BJ (cell line): ENCODE measurements at regions of chr3 and their contacts with region 1.

Region 1: GRCh38 chr3:141303481-141304223 is 64.7 kb upstream of the ZBTB38 start:
- DNase-seq: peak; percentile 44
- H3K4me3 ChIP-seq: no peak overlapping the region
- H3K27me3 ChIP-seq: no peaks in the 10 kb centered on the region
- CTCF ChIP-seq: peak; percentile 68

Region 2: DNA sequence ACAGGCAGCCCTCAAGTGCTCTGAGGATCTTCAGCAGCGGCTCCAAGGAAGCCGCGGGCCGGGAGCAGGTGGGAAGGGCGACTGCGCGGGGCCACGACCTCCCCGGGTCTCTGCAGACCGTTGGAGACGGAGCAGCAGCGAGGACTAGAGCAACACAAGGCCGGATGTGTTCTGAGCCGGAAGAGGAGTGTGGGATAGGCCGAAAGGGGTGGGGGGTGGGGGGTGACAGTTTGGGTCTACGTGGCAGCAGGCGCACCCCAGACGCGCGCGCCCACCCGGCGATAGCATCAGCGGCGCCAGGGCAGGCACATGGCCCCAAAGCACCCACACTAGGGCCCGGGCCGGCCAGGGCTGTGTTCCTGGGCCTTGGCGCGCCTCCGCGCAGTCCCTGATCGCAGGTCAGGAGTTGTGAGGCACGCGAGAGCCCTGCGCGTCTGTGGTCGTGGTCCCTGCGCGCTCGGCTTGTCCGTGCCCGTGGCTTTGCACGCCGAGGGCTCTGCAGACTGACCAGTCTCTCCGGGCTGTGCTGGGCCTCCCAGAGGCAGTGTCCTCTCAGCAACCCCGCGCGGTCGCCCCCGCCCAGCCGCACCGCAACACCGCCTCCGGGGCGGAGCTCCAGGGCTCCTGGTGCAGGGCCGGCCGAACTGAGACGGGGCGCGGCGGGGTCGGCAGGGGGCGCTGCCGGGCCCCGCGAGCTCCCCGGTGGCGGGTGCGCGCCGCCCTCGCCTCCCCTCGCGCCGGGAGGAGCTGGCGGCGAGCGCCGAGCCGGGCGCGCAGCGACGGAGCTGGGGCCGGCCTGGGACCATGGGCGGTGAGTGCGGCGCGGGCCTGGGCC is 72.3 kb before region 1 on chr3 and contains the start of gene PXYLP1:
- CTCF ChIA-PET with region 1: interaction called, 117 read pairs
- POLR2A ChIA-PET with region 1: interaction called, 4 read pairs
- DNase-seq: peak; percentile 41
- H3K4me3 ChIP-seq: peak within 1 kb of the TSS; percentile 70
- H3K27me3 ChIP-seq: 0 out of 2 replicates have a peak, but pooled peaks cover 2% of the 10 kb centered on the region
- CTCF ChIP-seq: peak; percentile 24; the same call in 1 of the 2 replicates
- polyA plus RNA-seq, gene PXYLP1: 7.9 and 11.2 TPM in 2 replicates

Region 3: GRCh38 chr3:141279077-141279967 is 24.3 kb before region 1 on chr3:
- CTCF ChIA-PET with region 1: interaction called, 11 read pairs
- POLR2A ChIA-PET with region 1: no interaction called
- DNase-seq: no peak
- H3K4me3 ChIP-seq: no peak overlapping the region
- H3K27me3 ChIP-seq: 0 out of 2 replicates have a peak, but pooled peaks cover 2% of the 10 kb centered on the region
- CTCF ChIP-seq: peak; percentile 52

Region 4: DNA sequence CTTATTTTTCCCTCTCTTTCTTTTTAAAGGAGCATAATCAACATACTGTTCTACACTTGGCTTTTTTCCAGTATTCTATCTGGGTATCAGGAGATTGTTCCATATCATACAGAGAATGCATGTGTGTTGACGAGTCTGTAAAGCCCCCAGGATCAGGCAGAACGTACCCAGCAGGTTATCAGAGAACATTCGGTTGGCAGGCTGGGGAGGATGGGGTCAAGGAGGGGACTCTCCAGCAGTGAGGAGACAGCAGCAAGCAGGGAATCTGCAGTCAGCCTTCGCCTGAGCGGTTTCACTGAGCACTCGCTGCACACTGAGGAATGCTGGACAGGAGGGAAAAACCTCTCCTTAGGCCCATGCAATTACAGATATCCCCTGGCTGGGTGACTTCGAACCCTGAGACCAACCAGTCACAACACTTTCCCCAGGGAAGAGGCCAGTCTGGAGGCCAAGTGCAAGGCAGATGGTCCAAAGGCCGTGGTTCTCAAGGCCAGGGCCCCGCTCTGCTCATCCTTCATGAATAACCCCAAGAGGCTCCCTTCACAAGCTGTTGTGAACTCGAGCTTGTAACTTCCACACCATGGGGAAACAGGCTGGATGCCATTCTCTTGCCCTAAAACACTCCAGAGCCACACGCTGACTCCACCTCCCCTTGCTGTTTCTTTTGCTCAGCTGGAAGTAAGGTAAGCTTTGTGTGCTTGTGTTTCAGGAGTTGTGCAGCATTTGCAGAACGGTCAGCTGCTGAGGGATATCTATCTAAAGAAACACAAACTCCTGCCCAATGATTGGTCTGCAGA is 11.9 kb before region 1 on chr3:
- CTCF ChIA-PET with region 1: interaction called, 14 read pairs
- POLR2A ChIA-PET with region 1: interaction called, 3 read pairs
- DNase-seq: no peak
- H3K4me3 ChIP-seq: no peak overlapping the region
- H3K27me3 ChIP-seq: no peaks in the 10 kb centered on the region
- CTCF ChIP-seq: no peak

Region 5: GRCh38 chr3:141321109-141321497 is 17.5 kb after region 1 on chr3:
- CTCF ChIA-PET with region 1: no interaction called
- POLR2A ChIA-PET with region 1: no interaction called
- DNase-seq: no peak
- H3K4me3 ChIP-seq: no peak overlapping the region
- H3K27me3 ChIP-seq: no peaks in the 10 kb centered on the region
- CTCF ChIP-seq: no peak

Region 6: DNA sequence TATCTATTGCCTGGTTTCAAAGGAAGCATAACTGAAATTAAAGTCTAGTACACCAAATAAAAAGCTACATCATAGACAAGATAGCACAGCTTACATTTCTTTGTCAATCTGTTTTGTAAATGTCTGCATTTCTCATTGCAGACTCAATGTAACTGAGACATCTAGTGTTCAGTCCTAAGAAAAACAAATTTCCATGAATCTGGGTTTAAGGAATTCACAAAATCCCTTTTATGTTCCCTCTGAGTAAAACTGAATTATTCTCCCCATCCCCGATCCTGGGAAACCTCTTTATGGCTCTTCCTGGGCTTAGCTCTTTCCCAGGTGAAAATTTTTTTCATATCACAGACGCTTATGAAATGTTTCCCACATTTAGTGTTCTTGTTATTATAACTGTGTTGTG is 161.6 kb after region 1 on chr3:
- CTCF ChIA-PET with region 1: interaction called, 282 read pairs
- POLR2A ChIA-PET with region 1: no interaction called
- DNase-seq: no peak
- H3K4me3 ChIP-seq: no peak overlapping the region
- H3K27me3 ChIP-seq: no peaks in the 10 kb centered on the region
- CTCF ChIP-seq: peak; percentile 48

Region 7: GRCh38 chr3:141561426-141562034 is 257.9 kb after region 1 on chr3:
- CTCF ChIA-PET with region 1: interaction called, 13 read pairs
- POLR2A ChIA-PET with region 1: no interaction called
- DNase-seq: peak; percentile 33
- H3K4me3 ChIP-seq: no peak overlapping the region
- H3K27me3 ChIP-seq: no peaks in the 10 kb centered on the region
- CTCF ChIP-seq: peak; percentile 93